Astrocyte of the cerebellum (primary cell): ENCODE measurements at regions of chr12 and their contacts with region 1.

Region 1: DNA sequence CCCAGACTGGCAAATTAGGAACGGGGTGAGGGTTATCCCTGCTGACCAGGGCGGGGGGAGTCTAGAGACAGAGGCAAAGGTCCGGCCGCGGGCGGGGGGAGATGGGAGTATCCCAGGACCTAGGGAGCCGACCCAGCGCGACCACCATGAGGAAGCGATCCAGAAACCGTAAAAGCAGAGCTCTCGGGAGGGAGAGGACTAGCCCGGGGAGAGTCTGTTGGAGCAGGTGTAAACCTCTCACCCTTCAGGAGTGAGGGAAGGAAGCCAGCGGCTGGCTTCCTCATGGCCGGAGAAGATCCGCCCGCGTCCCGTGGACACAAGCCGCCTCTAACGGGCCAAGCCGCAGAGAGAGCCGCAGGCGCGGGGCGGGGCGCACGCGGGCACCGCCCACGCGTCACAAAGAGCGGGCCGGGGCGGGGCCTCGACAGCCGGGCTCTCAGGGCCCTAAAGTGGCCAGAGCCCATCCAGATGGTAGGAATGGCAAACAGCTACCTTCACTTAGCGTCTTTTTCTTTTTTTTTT is at the start of gene ACRBP:
- DNase-seq: peak; percentile 13
- H3K4me3 ChIP-seq: peak within 1 kb of the TSS; percentile 34
- CTCF ChIP-seq: no peak

Region 2: GRCh38 chr12:6691473-6691872 is 44.3 kb after region 1 on chr12:
- in situ Hi-C with region 1: loop called (anchors 5 kb)
- DNase-seq: no peak
- H3K4me3 ChIP-seq: no peak overlapping the region
- CTCF ChIP-seq: no peak

Region 3: GRCh38 chr12:6873094-6874014 is 226.2 kb after region 1 on chr12 and contains the start of gene SPSB2:
- in situ Hi-C with region 1: no loop called
- DNase-seq: peak; percentile 83
- H3K4me3 ChIP-seq: peak within 1 kb of the TSS; percentile 64
- CTCF ChIP-seq: no peak